ENCODE measurements at regions of chr3 and their contacts with region 1.

Region 1: GRCh38 chr3:63611384-63611783 is 41.1 kb upstream of the SNTN start:
- DNase-seq: no peak
- H3K4me3 ChIP-seq: no peak overlapping the region
- H3K27ac ChIP-seq: no peak overlapping the region
- H3K4me1 ChIP-seq: no peaks in the 10 kb centered on the region
- H3K27me3 ChIP-seq: no peaks in the 10 kb centered on the region
- CTCF ChIP-seq: no peak
- POLR2A ChIP-seq: no peak

Region 2: GRCh38 chr3:63661248-63661647 is 49.9 kb after region 1 on chr3:
- CTCF ChIA-PET with region 1: no interaction called
- POLR2A ChIA-PET with region 1: no interaction called
- dilution Hi-C with region 1: no loop called
- intact Hi-C with region 1: loop called (anchors 1 kb)
- DNase-seq: no peak
- H3K4me3 ChIP-seq: no peak overlapping the region
- H3K27ac ChIP-seq: no peak overlapping the region
- H3K4me1 ChIP-seq: no peaks in the 10 kb centered on the region
- H3K27me3 ChIP-seq: no peaks in the 10 kb centered on the region
- CTCF ChIP-seq: no peak
- POLR2A ChIP-seq: no peak

Region 3: GRCh38 chr3:63863148-63864007 is 252.0 kb after region 1 on chr3 and contains the starts of genes ATXN7 and THOC7:
- CTCF ChIA-PET with region 1: no interaction called
- POLR2A ChIA-PET with region 1: no interaction called
- dilution Hi-C with region 1: no loop called
- intact Hi-C with region 1: no loop called
- DNase-seq: peak; percentile 50
- H3K4me3 ChIP-seq: peak within 1 kb of the TSS; percentile 42 to 99 (median 68)
- H3K27ac ChIP-seq: peak within 1 kb of the TSS; percentile 75
- H3K4me1 ChIP-seq: peaks cover 12% of the 10 kb centered on the region
- H3K27me3 ChIP-seq: no peaks in the 10 kb centered on the region
- CTCF ChIP-seq: no peak
- POLR2A ChIP-seq: no peak
- total RNA-seq, gene ATXN7: 27.1 and 34.7 TPM in 2 replicates
- total RNA-seq, gene THOC7: 68.7 and 69.4 TPM in 2 replicates